ENCODE measurements at regions of chr1 and their contacts with region 1.

Region 1: GRCh38 chr1:205121660-205122488 is at the start of gene RBBP5:
- DNase-seq: peak; percentile 94
- ATAC-seq: peak; percentile 92
- H3K4me3 Mint-ChIP-seq: peak within 1 kb of the TSS; percentile 99
- H3K27ac Mint-ChIP-seq: peak within 1 kb of the TSS; percentile 100
- H3K4me1 Mint-ChIP-seq: peaks cover 57% of the 10 kb centered on the region
- H3K27me3 Mint-ChIP-seq: no peaks in the 10 kb centered on the region
- CTCF ChIP-seq: no peak
- total RNA-seq, gene RBBP5: 16.3 and 19.7 TPM in 2 replicates

Region 2: GRCh38 chr1:203861379-203862184 is 1260.3 kb before region 1 on chr1 and contains the start of gene SNRPE:
- CTCF ChIA-PET with region 1: no interaction called
- POLR2A ChIA-PET with region 1: no interaction called
- intact Hi-C with region 1: loop called (anchors 2 kb)
- DNase-seq: peak; percentile 92
- ATAC-seq: peak; percentile 98
- H3K4me3 Mint-ChIP-seq: peak within 1 kb of the TSS; percentile 97
- H3K27ac Mint-ChIP-seq: peak within 1 kb of the TSS; percentile 98
- H3K4me1 Mint-ChIP-seq: peaks cover 24% of the 10 kb centered on the region
- H3K27me3 Mint-ChIP-seq: no peaks in the 10 kb centered on the region
- CTCF ChIP-seq: no peak
- total RNA-seq, gene SNRPE: 149 and 156 TPM in 2 replicates

Region 3: GRCh38 chr1:204498981-204499380 is 622.9 kb before region 1 on chr1:
- CTCF ChIA-PET with region 1: no interaction called
- POLR2A ChIA-PET with region 1: no interaction called
- intact Hi-C with region 1: no loop called
- DNase-seq: no peak
- ATAC-seq: no peak
- H3K4me3 Mint-ChIP-seq: no peak overlapping the region
- H3K27ac Mint-ChIP-seq: peak overlapping the region; percentile 65
- H3K4me1 Mint-ChIP-seq: peaks cover 69% of the 10 kb centered on the region
- H3K27me3 Mint-ChIP-seq: no peaks in the 10 kb centered on the region
- CTCF ChIP-seq: no peak

Region 4: GRCh38 chr1:205091043-205091740 is 30.7 kb before region 1 on chr1:
- CTCF ChIA-PET with region 1: no interaction called
- POLR2A ChIA-PET with region 1: no interaction called
- intact Hi-C with region 1: no loop called
- DNase-seq: no peak
- ATAC-seq: no peak
- H3K4me3 Mint-ChIP-seq: no peak overlapping the region
- H3K27ac Mint-ChIP-seq: no peak overlapping the region
- H3K4me1 Mint-ChIP-seq: no peaks in the 10 kb centered on the region
- H3K27me3 Mint-ChIP-seq: no peaks in the 10 kb centered on the region
- CTCF ChIP-seq: no peak

Region 5: DNA sequence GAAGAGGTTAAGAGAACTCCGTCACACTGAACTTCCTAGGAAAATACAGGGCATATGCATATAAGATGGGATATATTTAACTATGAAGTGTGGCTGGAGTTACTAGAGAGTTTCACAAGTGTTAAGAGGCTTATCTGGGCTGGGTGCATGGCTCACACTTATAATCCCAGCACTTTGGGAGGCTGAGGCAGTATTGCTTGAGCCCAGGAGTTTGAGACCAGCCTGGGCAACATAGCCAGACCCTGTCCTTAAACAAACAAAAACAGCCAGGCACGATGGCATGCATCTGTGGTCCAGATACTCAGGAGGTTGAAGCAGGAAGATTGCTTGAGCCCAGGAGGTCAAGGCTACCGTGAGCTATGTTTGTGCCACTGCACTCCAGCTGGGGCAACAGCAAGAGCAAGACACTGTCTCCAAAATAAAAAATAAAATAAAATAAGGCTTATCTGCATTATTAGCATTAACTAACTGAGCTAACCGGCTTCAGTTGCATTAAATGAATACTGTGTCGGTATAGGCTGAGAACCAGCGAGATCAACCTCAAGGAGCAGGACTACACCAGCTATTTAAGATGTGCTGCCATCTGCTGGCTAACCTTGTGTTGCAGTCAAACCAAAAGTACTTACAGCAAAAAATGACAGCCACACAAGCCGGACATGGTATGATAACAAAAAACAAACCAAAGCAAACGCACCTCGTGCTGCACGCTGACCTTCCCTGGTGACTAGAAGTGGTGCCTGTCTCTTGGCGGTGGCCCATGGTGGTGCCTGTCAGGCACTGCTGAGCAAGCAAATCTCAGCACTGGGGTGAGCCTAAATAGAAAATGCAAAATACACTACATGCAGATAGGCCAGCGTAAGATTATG is 19.6 kb after region 1 on chr1:
- CTCF ChIA-PET with region 1: interaction called, 36 read pairs
- POLR2A ChIA-PET with region 1: interaction called, 11 read pairs
- intact Hi-C with region 1: loop called (anchors 1 kb)
- DNase-seq: peak; percentile 47
- ATAC-seq: peak; percentile 79
- H3K4me3 Mint-ChIP-seq: no peak overlapping the region
- H3K27ac Mint-ChIP-seq: peak overlapping the region; percentile 57
- H3K4me1 Mint-ChIP-seq: peaks cover 27% of the 10 kb centered on the region
- H3K27me3 Mint-ChIP-seq: no peaks in the 10 kb centered on the region
- CTCF ChIP-seq: peak; percentile 24

Region 6: DNA sequence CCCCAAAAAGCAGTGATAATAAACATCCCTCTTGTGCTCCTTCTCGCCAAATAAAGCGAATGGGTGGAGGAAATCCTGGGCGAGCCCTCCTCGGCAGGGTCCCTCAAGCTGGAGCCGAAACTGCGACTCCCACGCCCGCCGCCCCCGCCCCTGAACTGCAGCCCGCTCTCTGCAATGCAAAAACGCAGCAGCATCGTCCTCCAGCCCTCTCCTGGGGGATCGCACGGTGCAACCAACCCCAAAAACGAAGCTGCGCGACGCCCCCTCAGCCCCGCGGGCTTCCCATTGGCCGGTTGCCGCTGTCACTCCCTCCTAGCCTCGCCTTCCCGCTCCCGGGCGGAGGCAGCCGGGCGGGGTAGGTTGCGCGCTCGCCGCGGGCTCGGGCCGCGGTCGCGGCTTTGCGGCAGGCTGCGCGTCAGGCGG is 105.7 kb after region 1 on chr1 and contains the start of gene TMCC2:
- CTCF ChIA-PET with region 1: interaction called, 6 read pairs
- POLR2A ChIA-PET with region 1: interaction called, 7 read pairs
- intact Hi-C with region 1: loop called (anchors 5 kb)
- DNase-seq: peak; percentile 73
- ATAC-seq: peak; percentile 88
- H3K4me3 Mint-ChIP-seq: peak within 1 kb of the TSS; percentile 84
- H3K27ac Mint-ChIP-seq: peak within 1 kb of the TSS; percentile 42
- H3K4me1 Mint-ChIP-seq: peaks cover 29% of the 10 kb centered on the region
- H3K27me3 Mint-ChIP-seq: peaks cover 9% of the 10 kb centered on the region
- CTCF ChIP-seq: no peak
- total RNA-seq, gene TMCC2: 1.2 and 1.4 TPM in 2 replicates

Region 7: DNA sequence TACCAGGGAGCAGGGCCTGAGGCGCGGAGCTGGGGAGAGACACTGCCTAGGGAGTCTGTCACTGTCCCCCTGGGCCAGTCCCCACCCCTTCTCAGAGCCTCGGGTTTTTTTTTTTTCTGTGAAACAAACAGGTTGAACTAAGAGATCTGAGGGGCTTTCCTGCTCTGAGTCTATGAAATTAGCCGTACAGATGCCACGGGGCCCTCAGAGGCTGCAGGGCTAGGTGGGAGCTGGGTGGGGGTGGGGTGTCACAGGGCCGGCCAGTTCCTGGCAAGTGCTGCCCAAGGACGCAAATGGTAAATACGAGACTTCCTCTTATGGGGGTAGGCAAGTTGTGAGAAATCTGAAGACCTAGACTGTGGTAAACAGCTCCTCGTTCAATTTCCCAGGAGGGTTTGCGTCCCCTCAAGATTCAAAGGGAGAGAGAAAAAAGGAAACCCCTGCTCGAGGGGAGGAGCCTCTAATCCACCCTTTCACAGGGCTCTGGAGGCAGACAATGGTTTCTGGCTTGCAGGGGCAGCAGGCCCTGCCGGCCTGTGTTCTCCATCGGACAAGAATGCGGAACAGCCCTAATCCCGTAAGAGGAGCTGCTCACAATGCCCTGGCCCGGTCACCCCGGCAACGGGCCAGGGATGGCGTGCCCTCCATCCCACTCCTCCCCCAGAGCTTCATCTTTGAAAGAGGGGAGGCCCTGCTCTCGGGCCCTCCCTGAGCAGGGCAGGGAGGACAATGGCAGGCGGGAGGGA is 191.9 kb after region 1 on chr1:
- CTCF ChIA-PET with region 1: no interaction called
- POLR2A ChIA-PET with region 1: interaction called, 4 read pairs
- intact Hi-C with region 1: loop called (anchors 10 kb)
- DNase-seq: peak; percentile 55
- ATAC-seq: peak; percentile 82
- H3K4me3 Mint-ChIP-seq: peak overlapping the region; percentile 85
- H3K27ac Mint-ChIP-seq: peak overlapping the region; percentile 98
- H3K4me1 Mint-ChIP-seq: peaks cover 95% of the 10 kb centered on the region
- H3K27me3 Mint-ChIP-seq: no peaks in the 10 kb centered on the region
- CTCF ChIP-seq: no peak

Region 8: GRCh38 chr1:205591522-205592351 is 469.9 kb after region 1 on chr1:
- CTCF ChIA-PET with region 1: no interaction called
- POLR2A ChIA-PET with region 1: interaction called, 4 read pairs
- intact Hi-C with region 1: loop called (anchors 5 kb)
- DNase-seq: peak; percentile 89
- ATAC-seq: peak; percentile 89
- H3K4me3 Mint-ChIP-seq: peak overlapping the region; percentile 90
- H3K27ac Mint-ChIP-seq: peak overlapping the region; percentile 90
- H3K4me1 Mint-ChIP-seq: peaks cover 48% of the 10 kb centered on the region
- H3K27me3 Mint-ChIP-seq: no peaks in the 10 kb centered on the region
- CTCF ChIP-seq: peak; percentile 87